ENCODE measurements at regions of chr12 and their contacts with region 1.

Region 1: GRCh38 chr12:53065975-53066931 is 12.9 kb downstream of the SPRYD3 start:
- DNase-seq: peak; percentile 80 to 96
- ATAC-seq: peak; percentile 56 to 84
- H3K4me3 ChIP-seq: no peak overlapping the region
- H3K27ac ChIP-seq: peak overlapping the region; percentile 65 to 87
- H3K4me1 ChIP-seq: peaks cover 36% of the 10 kb centered on the region
- CTCF ChIP-seq: peak; percentile 96
- EP300 ChIP-seq: no peak
- POLR2A ChIP-seq: no peak
- RAD21 ChIP-seq: peak; percentile 95 to 98

Region 2: DNA sequence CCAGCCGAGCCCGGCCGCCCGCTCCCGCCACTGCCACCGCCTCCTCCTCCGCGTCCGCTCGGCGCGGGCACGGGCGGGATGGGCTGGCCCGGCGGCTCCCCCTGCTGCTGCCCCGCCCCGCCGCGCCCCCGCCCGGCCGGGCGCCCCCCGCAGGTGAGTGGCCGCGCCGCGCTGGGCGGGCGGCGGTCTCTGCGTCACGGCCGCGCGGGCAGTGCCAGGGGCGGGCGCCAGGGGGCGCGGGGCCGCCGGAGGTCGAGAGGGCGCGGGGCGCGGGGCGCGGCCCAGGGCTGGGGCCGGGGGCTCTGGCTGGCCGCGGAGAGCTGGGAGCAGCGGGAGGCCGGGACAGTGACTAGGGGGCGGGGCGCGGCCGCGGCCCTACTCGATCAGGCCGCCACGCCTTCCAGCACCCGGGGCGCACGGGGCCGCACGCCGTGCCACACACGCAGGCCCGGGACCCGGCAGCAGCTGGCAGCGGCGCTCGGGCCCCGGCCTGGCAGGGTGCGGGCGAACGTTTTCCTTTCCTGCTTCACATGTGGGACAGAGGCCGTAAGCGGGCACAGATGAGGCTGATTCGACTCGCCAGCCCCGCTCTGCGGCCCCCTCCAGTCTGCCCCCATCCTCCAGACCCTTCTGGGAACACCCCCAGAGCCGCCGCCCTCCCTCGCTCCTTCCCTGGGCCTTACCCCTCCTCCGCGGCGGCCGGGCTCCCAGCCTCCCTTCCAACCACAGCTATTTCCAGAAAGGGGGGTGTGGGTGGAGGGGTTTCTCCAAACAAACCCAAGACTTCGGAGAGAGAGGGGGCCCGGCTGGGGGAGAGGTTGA is 18.8 kb before region 1 on chr12:
- CTCF ChIA-PET with region 1: interaction called, 1,424 read pairs
- POLR2A ChIA-PET with region 1: interaction called, 11 read pairs
- DNase-seq: peak; percentile 67 to 83
- ATAC-seq: peak; percentile 36 to 37
- H3K4me3 ChIP-seq: peak overlapping the region; percentile 54
- H3K27ac ChIP-seq: peak overlapping the region; percentile 99
- H3K4me1 ChIP-seq: peaks cover 74% of the 10 kb centered on the region
- CTCF ChIP-seq: peak; percentile 71
- EP300 ChIP-seq: no peak
- POLR2A ChIP-seq: peak; percentile 38
- RAD21 ChIP-seq: no peak

Region 3: GRCh38 chr12:53098982-53099651 is 32.9 kb after region 1 on chr12:
- CTCF ChIA-PET with region 1: interaction called, 1,424 read pairs
- POLR2A ChIA-PET with region 1: interaction called, 29 read pairs
- DNase-seq: peak; percentile 95 to 98
- ATAC-seq: peak; percentile 71 to 75
- H3K4me3 ChIP-seq: peak overlapping the region; percentile 54
- H3K27ac ChIP-seq: peak overlapping the region; percentile 92 to 95
- H3K4me1 ChIP-seq: peaks cover 50% of the 10 kb centered on the region
- CTCF ChIP-seq: peak; percentile 98
- EP300 ChIP-seq: no peak
- POLR2A ChIP-seq: peak; percentile 30
- RAD21 ChIP-seq: peak; percentile 95 to 96

Region 4: DNA sequence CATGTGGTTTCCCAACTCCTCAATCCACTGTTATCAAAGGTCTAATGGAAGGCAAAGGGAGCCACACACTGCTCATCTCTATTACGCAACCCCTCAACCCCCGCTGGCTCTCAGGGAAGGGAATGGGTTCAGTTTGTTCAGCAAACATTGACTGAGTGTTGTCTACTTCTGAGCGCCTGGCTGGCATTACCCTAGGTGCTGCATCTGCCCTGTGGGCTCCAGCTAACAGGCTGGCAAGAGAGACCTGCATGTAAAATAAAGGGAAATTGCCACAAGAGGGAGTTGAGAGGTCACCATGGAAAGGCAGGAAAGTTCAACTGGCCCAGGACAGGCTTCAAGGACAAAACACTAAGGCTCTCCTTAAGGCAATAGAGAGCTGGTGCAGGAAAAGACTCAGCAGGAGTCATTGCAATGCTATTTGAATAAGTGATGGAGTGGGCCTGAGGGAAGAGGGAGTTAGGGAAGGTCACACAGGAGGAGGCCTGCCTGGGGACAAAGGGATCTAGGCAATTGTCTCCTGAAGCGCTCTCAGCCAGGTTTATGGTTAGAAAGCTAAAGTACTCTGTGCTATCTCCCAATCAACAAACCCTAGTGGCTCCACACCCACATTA is 108.7 kb after region 1 on chr12:
- CTCF ChIA-PET with region 1: interaction called, 20 read pairs
- POLR2A ChIA-PET with region 1: interaction called, 4 read pairs
- DNase-seq: peak; percentile 72 to 94
- ATAC-seq: peak; percentile 88 to 91
- H3K4me3 ChIP-seq: no peak overlapping the region
- H3K27ac ChIP-seq: peak overlapping the region; percentile 79
- H3K4me1 ChIP-seq: peaks cover 70% of the 10 kb centered on the region
- CTCF ChIP-seq: peak; percentile 57
- EP300 ChIP-seq: peak in 1 of 2 experiments; percentile 57; a peak in 1 of 5 replicates
- POLR2A ChIP-seq: no peak
- RAD21 ChIP-seq: peak; percentile 67 to 69

Region 5: GRCh38 chr12:53190108-53190729 is 124.0 kb after region 1 on chr12:
- CTCF ChIA-PET with region 1: interaction called, 141 read pairs
- POLR2A ChIA-PET with region 1: interaction called, 4 read pairs
- DNase-seq: peak; percentile 73 to 87
- ATAC-seq: peak; percentile 87 to 90
- H3K4me3 ChIP-seq: no peak overlapping the region
- H3K27ac ChIP-seq: peak overlapping the region; percentile 33 to 44; a peak in 3 of 6 replicates
- H3K4me1 ChIP-seq: peaks cover 15% of the 10 kb centered on the region; the same call in 2 of the 3 replicates
- CTCF ChIP-seq: peak; percentile 78
- EP300 ChIP-seq: no peak
- POLR2A ChIP-seq: no peak
- RAD21 ChIP-seq: peak; percentile 65 to 66; a peak in 4 of 5 replicates

Region 6: DNA sequence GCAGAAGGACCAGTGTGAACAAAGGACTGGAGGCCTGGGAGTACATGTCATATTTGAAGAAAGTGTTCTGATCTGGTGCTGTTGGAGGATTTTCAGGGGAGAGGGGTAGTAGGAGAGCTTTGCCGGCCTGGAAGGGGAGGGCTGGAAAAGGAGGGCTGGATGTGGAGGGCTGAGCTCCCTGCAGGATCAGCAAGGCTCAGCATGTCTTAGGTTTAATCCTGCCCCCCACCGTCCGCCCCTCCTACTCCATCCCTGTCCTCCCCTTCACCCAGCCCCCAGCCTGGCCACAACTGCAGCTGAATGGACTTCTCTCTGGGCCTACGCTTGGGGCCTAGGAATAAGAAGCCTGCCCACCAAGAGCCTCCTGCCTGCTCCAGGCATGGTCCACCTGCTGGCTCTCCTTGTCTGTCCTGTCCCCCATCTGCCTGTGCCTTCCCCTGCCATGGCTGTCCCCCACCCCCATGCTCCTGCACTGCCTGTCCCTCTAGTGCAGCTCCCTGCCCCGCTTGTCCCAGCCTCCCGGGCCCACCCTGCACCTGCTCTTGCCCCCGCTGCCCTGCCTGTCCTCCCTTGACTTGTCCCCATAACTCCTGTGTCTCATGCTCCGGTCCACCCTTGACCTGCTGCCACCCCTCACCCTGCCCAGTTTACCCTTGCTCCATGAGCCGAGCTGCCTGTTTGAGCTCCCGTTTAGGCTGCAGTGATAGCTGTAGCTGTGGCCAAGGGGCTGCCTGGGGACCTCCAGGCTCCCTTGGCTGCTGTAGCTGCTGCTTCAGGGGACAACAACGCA is 175.6 kb after region 1 on chr12:
- CTCF ChIA-PET with region 1: interaction called, 12 read pairs
- POLR2A ChIA-PET with region 1: no interaction called
- DNase-seq: no peak
- ATAC-seq: peak; percentile 24 to 41; a peak in 4 of 6 replicates
- H3K4me3 ChIP-seq: no peak overlapping the region
- H3K27ac ChIP-seq: no peak overlapping the region
- H3K4me1 ChIP-seq: no peaks in the 10 kb centered on the region
- CTCF ChIP-seq: no peak
- EP300 ChIP-seq: no peak
- POLR2A ChIP-seq: no peak
- RAD21 ChIP-seq: no peak

Region 7: DNA sequence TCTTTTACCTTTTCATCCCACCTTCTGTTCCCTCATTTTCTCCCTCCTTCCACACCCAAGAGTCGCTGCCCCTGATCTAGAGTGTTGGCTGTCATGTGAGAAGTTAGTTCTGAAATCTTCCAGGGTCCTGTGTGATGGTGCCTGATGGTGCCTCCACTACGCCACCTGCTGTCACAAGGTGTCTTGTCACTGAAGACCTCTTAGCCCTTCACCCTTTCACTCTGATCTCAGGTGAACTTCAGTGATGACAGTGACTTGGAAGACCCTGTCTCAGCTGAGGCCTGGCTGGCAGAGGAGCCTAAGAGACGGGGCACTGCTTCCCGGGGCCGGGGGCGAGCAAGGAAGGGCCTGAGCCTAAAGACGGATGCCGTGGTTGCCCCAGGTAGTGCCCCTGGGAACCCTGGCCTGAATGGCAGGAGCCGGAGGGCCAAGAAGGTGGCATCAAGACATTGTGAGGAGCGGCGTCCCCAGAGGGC is 221.5 kb after region 1 on chr12:
- CTCF ChIA-PET with region 1: interaction called, 19 read pairs
- POLR2A ChIA-PET with region 1: interaction called, 3 read pairs
- DNase-seq: peak; percentile 79 to 82
- ATAC-seq: peak; percentile 84 to 91
- H3K4me3 ChIP-seq: no peak overlapping the region
- H3K27ac ChIP-seq: no peak overlapping the region
- H3K4me1 ChIP-seq: no peaks in the 10 kb centered on the region
- CTCF ChIP-seq: peak; percentile 78
- EP300 ChIP-seq: no peak
- POLR2A ChIP-seq: no peak
- RAD21 ChIP-seq: peak; percentile 79 to 84

Measured in A549 (cell line).